Right ventricle myocardium inferior (tissue), 1 donor: ENCODE measurements at regions of chr4 and their contacts with region 1.

Region 1: GRCh38 chr4:74874753-74875367 is 58.1 kb upstream of the PARM1 start:
- DNase-seq: no peak
- ATAC-seq: peak; percentile 75

Region 2: GRCh38 chr4:74793757-74794340 is 81.0 kb before region 1 on chr4:
- intact Hi-C with region 1: no loop called
- DNase-seq: peak; percentile 60
- ATAC-seq: peak; percentile 42

Region 3: DNA sequence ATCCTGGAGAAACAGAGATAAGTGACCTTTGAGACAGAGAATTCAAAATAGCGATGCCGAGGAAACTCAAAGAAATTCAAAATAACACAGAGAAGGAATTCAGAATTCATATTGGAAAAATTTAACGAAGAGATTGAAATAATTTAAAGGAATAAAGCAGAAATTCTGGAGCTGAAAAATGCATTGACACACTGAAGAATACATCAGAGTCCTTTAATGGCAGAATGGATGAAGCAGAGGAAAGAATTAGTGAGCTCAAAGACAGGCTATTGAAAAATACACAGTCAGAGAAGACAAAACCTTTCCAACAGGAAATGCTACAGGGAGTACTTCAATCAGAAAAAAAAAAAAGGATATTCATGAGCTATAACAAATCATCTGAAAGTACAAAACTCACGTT is 243.9 kb after region 1 on chr4:
- intact Hi-C with region 1: loop called (anchors 1 kb)
- DNase-seq: no peak
- ATAC-seq: no peak

Region 4: DNA sequence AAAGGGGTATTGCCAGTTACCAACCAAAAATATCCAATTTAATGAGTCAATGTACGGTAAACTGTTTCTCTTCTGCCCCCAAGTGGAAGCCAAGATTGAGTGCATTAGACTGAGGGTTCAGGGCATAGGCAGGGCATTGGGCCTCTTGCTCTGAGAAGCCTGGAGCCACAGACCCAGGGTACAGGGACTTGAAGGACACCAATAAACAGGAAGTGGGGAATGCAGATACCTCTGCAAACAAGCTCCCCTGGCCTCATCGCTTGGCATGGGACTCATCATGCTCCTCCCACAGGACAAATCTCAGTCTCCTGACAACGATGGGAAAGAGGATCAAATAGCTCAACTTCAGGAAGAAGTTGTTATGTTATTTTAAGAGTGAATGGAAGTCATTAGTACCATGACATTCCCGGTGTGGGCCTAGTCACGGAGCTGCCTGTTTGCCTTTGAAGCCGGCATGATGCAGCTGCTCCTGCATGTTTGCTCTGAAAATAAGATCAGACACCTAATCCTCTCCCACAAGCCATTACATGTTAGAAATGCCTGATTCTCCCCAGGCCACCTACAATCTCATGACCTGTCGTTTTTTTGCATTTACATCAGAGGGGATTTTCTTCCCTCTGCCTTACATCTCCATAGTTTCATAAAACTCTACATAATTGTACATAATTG is 415.2 kb after region 1 on chr4:
- intact Hi-C with region 1: loop called (anchors 10 kb)
- DNase-seq: peak; percentile 43
- ATAC-seq: no peak

Region 5: DNA sequence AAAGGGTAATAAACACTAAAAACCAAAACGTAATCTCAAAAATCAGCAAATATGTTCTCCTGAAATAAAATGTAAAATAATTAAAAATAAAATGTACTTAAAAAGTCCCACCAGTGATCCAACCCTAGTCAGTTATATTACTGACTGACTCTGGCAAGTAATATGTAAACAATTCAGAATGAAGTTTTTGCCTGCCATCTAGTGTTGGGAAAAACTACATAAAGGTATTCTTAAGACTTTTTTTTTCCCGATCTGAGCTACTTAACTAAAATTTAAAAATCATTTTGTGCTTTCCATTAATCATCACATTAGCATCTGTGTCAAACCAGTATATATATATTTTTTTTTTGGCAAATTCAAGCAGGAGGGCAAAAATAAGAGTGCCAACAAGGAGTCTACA is 615.3 kb after region 1 on chr4:
- intact Hi-C with region 1: loop called (anchors 10 kb)
- DNase-seq: no peak
- ATAC-seq: no peak